ENCODE measurements at regions of chr5 and their contacts with region 1.

Region 1: GRCh38 chr5:132238169-132238744 is 10.6 kb upstream of the P4HA2 start:
- DNase-seq: no peak
- ATAC-seq: peak; percentile 96
- H3K4me3 ChIP-seq: no peak overlapping the region
- H3K27ac ChIP-seq: no peak overlapping the region
- H3K4me1 ChIP-seq: no peaks in the 10 kb centered on the region
- H3K27me3 ChIP-seq: no peaks in the 10 kb centered on the region
- CTCF ChIP-seq: peak; percentile 65 to 87 (median 81)
- POLR2A ChIP-seq: no peak
- RAD21 ChIP-seq: peak; percentile 85

Region 2: GRCh38 chr5:132227485-132228240 is 10.6 kb before region 1 on chr5 and contains the start of gene P4HA2:
- CTCF ChIA-PET with region 1: interaction called, 14 read pairs
- POLR2A ChIA-PET with region 1: interaction called, 7 read pairs
- RAD21 ChIA-PET with region 1: no interaction called
- intact Hi-C with region 1: no loop called
- DNase-seq: peak; percentile 56
- ATAC-seq: peak; percentile 94
- H3K4me3 ChIP-seq: peak within 1 kb of the TSS; percentile 67 to 77
- H3K27ac ChIP-seq: peak within 1 kb of the TSS; percentile 81
- H3K4me1 ChIP-seq: peaks cover 19 to 38% of the 10 kb centered on the region in 2 experiments
- H3K27me3 ChIP-seq: no peaks in the 10 kb centered on the region
- CTCF ChIP-seq: peak in 2 of 3 experiments; percentile 22 to 24; a peak in 2 of 6 replicates
- POLR2A ChIP-seq: peak; percentile 87
- RAD21 ChIP-seq: no peak
- total RNA-seq, gene P4HA2: 29.0 TPM

Region 3: GRCh38 chr5:132251220-132251725 is 13.0 kb after region 1 on chr5:
- CTCF ChIA-PET with region 1: interaction called, 12 read pairs
- POLR2A ChIA-PET with region 1: interaction called, 3 read pairs
- RAD21 ChIA-PET with region 1: no interaction called
- intact Hi-C with region 1: no loop called
- DNase-seq: no peak
- ATAC-seq: no peak
- H3K4me3 ChIP-seq: no peak overlapping the region
- H3K27ac ChIP-seq: no peak overlapping the region
- H3K4me1 ChIP-seq: peaks cover 0 to 9% of the 10 kb centered on the region in 2 experiments; a peak in 1 of 4 replicates
- H3K27me3 ChIP-seq: no peaks in the 10 kb centered on the region
- CTCF ChIP-seq: no peak
- POLR2A ChIP-seq: no peak
- RAD21 ChIP-seq: no peak

Region 4: DNA sequence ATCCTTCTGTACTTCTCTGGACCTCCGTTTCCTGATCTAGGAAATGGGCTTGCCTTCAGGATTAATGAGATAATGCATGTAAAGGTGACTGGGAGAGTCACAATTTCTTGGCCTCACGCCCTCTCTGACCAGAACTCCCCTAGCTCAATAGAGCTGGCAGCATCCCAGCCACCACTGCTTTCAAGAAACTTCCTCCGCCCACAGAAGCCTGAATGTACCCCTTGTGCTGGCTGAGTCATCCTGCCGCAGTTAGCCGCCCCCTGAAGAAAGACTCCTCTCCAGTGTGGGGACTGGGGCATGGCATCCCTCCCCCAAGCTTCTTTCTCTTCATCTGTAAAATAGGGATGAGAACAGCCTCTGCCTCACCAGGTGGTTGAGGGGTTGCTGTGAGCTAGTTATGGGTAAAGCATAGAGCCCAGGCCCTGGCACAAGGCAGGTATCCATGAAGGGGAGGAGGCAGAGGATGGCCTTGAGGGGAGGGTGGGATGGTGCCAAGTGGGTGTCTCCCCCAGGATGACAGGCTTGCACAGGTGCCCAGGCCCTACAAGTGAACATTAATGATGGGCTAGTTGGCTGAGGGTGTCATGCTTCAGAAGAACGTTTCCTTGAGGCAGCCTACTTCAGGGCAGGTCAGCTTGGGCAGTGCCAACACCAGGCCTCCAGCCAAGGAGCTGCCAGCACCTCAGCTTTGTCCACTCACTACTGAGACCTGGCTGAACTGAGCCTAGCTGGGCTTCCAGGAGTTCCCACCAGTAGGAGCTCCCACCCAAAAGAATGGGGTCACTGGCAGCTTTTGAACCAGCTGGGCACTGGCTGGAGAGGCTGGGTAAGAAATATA is 22.7 kb after region 1 on chr5:
- CTCF ChIA-PET with region 1: interaction called, 14 read pairs
- POLR2A ChIA-PET with region 1: no interaction called
- RAD21 ChIA-PET with region 1: no interaction called
- intact Hi-C with region 1: no loop called
- DNase-seq: peak; percentile 72
- ATAC-seq: peak; percentile 69
- H3K4me3 ChIP-seq: peak overlapping the region in 1 of 2 experiments; percentile 35; a peak in 2 of 4 replicates
- H3K27ac ChIP-seq: peak overlapping the region; percentile 36
- H3K4me1 ChIP-seq: peaks cover 27 to 74% of the 10 kb centered on the region in 2 experiments
- H3K27me3 ChIP-seq: no peaks in the 10 kb centered on the region
- CTCF ChIP-seq: no peak
- POLR2A ChIP-seq: no peak
- RAD21 ChIP-seq: no peak

Region 5: GRCh38 chr5:132293066-132293991 is 55.1 kb after region 1 on chr5:
- CTCF ChIA-PET with region 1: interaction called, 19 read pairs
- POLR2A ChIA-PET with region 1: interaction called, 16 read pairs
- RAD21 ChIA-PET with region 1: interaction called in 1 of 2 experiments, 6 read pairs
- intact Hi-C with region 1: no loop called
- DNase-seq: peak; percentile 59
- ATAC-seq: peak; percentile 62
- H3K4me3 ChIP-seq: peak overlapping the region; percentile 59 to 79
- H3K27ac ChIP-seq: peak overlapping the region; percentile 90
- H3K4me1 ChIP-seq: peaks cover 14 to 37% of the 10 kb centered on the region in 2 experiments
- H3K27me3 ChIP-seq: no peaks in the 10 kb centered on the region
- CTCF ChIP-seq: 0 out of 6 replicates have a peak, but pooled peaks of 2 of the 3 experiments have one; percentile 5 to 16
- POLR2A ChIP-seq: peak; percentile 39
- RAD21 ChIP-seq: no peak

Region 6: GRCh38 chr5:132369474-132370180 is 131.4 kb after region 1 on chr5 and contains the start of gene SLC22A5:
- CTCF ChIA-PET with region 1: interaction called, 14 read pairs
- POLR2A ChIA-PET with region 1: no interaction called
- RAD21 ChIA-PET with region 1: no interaction called
- intact Hi-C with region 1: no loop called
- DNase-seq: peak; percentile 42
- ATAC-seq: peak; percentile 94
- H3K4me3 ChIP-seq: peak within 1 kb of the TSS; percentile 71 to 75
- H3K27ac ChIP-seq: peak within 1 kb of the TSS; percentile 83
- H3K4me1 ChIP-seq: peaks cover 16 to 47% of the 10 kb centered on the region in 2 experiments
- H3K27me3 ChIP-seq: no peaks in the 10 kb centered on the region
- CTCF ChIP-seq: no peak
- POLR2A ChIP-seq: peak; percentile 71
- RAD21 ChIP-seq: no peak
- total RNA-seq, gene SLC22A5: 9.9 TPM

Measured in HCT116 (cell line).